ENCODE measurements at regions of chr15 and their contacts with region 1.

Region 1: GRCh38 chr15:75204340-75205063 is 2.8 kb downstream of the C15orf39 start:
- DNase-seq: peak; percentile 69 to 89 (median 82)
- ATAC-seq: peak; percentile 36 to 57 (median 50)
- H3K4me3 ChIP-seq: no peak overlapping the region
- H3K4me3 Mint-ChIP-seq: peak overlapping the region; percentile 39 to 94 (median 60)
- H3K27ac ChIP-seq: peak overlapping the region; percentile 75
- H3K27ac Mint-ChIP-seq: peak overlapping the region; percentile 77 to 88
- H3K4me1 ChIP-seq: peaks cover 20 to 48% of the 10 kb centered on the region in 2 experiments
- H3K4me1 Mint-ChIP-seq: peaks cover 42 to 50% (median 48%) of the 10 kb centered on the region in 3 donors
- H3K27me3 ChIP-seq: peaks cover 0 to 7% of the 10 kb centered on the region in 2 experiments
- H3K27me3 Mint-ChIP-seq: no peaks in the 10 kb centered on the region

Region 2: GRCh38 chr15:75042730-75043508 is 161.6 kb before region 1 on chr15:
- CTCF ChIA-PET with region 1: interaction called in 1 of 2 experiments, 10 read pairs
- POLR2A ChIA-PET with region 1: no interaction called
- DNase-seq: peak; percentile 22 to 81 (median 53)
- ATAC-seq: peak; percentile 73 to 84 (median 78)
- H3K4me3 ChIP-seq: no peak overlapping the region
- H3K4me3 Mint-ChIP-seq: no peak overlapping the region
- H3K27ac ChIP-seq: peak overlapping the region; percentile 53
- H3K27ac Mint-ChIP-seq: peak overlapping the region; percentile 34 to 66
- H3K4me1 ChIP-seq: peaks cover 0 to 44% of the 10 kb centered on the region in 2 experiments
- H3K4me1 Mint-ChIP-seq: peaks cover 14 to 53% (median 28%) of the 10 kb centered on the region in 3 donors
- H3K27me3 ChIP-seq: no peaks in the 10 kb centered on the region
- H3K27me3 Mint-ChIP-seq: no peaks in the 10 kb centered on the region

Region 3: DNA sequence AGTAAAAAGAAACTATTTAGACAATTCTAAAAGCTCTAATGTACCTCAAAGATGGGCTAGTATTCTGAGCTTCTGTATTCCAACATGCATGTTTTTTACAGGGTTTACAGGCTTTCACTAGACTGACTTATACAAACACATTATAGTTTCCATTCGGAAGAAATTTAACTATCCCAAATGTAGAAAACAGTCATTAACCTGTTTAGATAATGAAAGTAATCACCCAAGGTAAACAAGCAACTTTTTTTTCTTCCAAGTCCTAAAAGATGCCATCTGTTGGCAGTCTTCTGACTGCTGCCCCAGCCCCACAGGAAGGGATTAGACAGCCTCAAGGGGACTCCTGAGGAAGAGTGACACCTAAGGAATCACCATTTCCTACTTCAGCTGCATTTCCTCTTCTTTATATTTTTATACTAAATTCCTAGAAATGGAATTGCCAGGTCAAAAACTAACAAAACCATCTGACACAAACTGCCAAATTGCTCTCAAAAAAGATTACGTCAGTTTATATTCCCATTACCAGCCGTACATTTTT is 221.5 kb after region 1 on chr15:
- CTCF ChIA-PET with region 1: no interaction called
- POLR2A ChIA-PET with region 1: no interaction called
- DNase-seq: no peak
- ATAC-seq: no peak
- H3K4me3 ChIP-seq: no peak overlapping the region
- H3K4me3 Mint-ChIP-seq: no peak overlapping the region
- H3K27ac ChIP-seq: no peak overlapping the region
- H3K27ac Mint-ChIP-seq: no peak overlapping the region
- H3K4me1 ChIP-seq: peaks cover 0 to 3% of the 10 kb centered on the region in 2 experiments
- H3K4me1 Mint-ChIP-seq: peaks cover 11 to 40% (median 24%) of the 10 kb centered on the region in 3 donors
- H3K27me3 ChIP-seq: no peaks in the 10 kb centered on the region
- H3K27me3 Mint-ChIP-seq: no peaks in the 10 kb centered on the region